ENCODE measurements at regions of chr15 and their contacts with region 1.

Region 1: GRCh38 chr15:55649054-55649423 is 60.9 kb upstream of the PYGO1 start:
- DNase-seq: no peak
- H3K4me3 ChIP-seq: no peak overlapping the region
- H3K27ac ChIP-seq: no peak overlapping the region
- H3K4me1 ChIP-seq: no peaks in the 10 kb centered on the region
- H3K27me3 ChIP-seq: no peaks in the 10 kb centered on the region
- CTCF ChIP-seq: no peak

Region 2: GRCh38 chr15:55526559-55527036 is 122.4 kb before region 1 on chr15:
- intact Hi-C with region 1: loop called (anchors 5 kb)
- DNase-seq: no peak
- H3K4me3 ChIP-seq: no peak overlapping the region
- H3K27ac ChIP-seq: no peak overlapping the region
- H3K4me1 ChIP-seq: no peaks in the 10 kb centered on the region
- H3K27me3 ChIP-seq: no peaks in the 10 kb centered on the region
- CTCF ChIP-seq: peak; percentile 37

Region 3: GRCh38 chr15:55715355-55716076 is 66.5 kb after region 1 on chr15:
- intact Hi-C with region 1: no loop called
- DNase-seq: no peak
- H3K4me3 ChIP-seq: no peak overlapping the region
- H3K27ac ChIP-seq: no peak overlapping the region
- H3K4me1 ChIP-seq: no peaks in the 10 kb centered on the region
- H3K27me3 ChIP-seq: no peaks in the 10 kb centered on the region
- CTCF ChIP-seq: no peak

Region 4: DNA sequence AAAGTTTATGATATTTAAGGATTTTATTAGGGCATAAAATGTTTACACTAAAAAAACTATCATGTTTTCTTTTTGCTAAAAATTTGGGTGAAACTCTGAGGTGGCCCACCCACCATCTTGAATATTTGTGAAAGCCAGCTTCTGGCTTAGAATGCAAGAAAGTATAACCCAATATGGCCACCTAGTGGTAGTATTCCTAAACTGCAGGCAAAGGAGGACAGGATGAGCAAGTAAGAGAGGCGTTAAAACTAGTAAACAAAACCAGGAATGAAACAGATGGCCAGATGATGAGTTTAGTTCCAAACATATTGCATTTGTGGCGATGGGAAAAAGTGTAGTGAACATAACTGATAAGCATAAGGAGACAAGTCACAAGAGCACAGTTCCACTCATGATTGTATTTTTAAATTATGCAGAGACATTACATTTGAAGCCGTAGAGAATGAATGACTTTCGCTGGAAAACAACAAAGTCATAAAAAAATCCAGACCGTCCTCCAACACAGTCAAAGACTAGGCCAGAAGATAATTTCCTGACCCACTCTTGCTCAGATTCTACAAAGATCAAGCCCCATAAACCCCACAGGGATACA is 197.2 kb after region 1 on chr15:
- intact Hi-C with region 1: loop called (anchors 2 kb)
- DNase-seq: peak; percentile 72
- H3K4me3 ChIP-seq: no peak overlapping the region
- H3K27ac ChIP-seq: no peak overlapping the region
- H3K4me1 ChIP-seq: no peaks in the 10 kb centered on the region
- H3K27me3 ChIP-seq: no peaks in the 10 kb centered on the region
- CTCF ChIP-seq: peak; percentile 80

Region 5: GRCh38 chr15:55897560-55898336 is 248.7 kb after region 1 on chr15:
- intact Hi-C with region 1: loop called (anchors 5 kb)
- DNase-seq: peak; percentile 56
- H3K4me3 ChIP-seq: no peak overlapping the region
- H3K27ac ChIP-seq: peak overlapping the region; percentile 36
- H3K4me1 ChIP-seq: no peaks in the 10 kb centered on the region
- H3K27me3 ChIP-seq: no peaks in the 10 kb centered on the region
- CTCF ChIP-seq: peak; percentile 73